ENCODE measurements at regions of chr1 and their contacts with region 1.

Region 1: GRCh38 chr1:57512386-57512785 is 88.5 kb upstream of the DAB1 start:
- DNase-seq: no peak
- H3K4me3 ChIP-seq: no peak overlapping the region
- H3K27ac ChIP-seq: no peak overlapping the region
- H3K4me1 ChIP-seq: no peaks in the 10 kb centered on the region
- H3K27me3 ChIP-seq: no peaks in the 10 kb centered on the region
- CTCF ChIP-seq: no peak
- POLR2A ChIP-seq: no peak

Region 2: DNA sequence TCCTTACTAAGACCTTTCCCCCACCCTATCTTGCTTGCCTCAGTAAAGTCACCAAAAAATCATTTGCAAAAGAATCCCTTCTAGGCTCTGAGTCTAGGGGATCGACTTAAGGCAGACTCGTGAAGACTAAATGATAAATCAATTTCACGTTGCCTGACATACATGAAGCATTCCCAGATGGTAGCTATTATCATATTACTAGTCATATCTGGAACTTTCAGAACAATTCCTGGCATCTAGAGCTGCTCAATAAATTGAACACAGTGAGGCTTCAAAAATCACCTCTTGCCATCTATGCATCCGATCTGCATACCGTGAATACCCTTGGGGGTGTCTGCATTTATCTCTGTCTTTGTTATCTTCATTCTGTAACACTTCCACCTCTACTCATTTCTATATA is 38.9 kb before region 1 on chr1:
- intact Hi-C with region 1: loop called (anchors 2 kb)
- DNase-seq: no peak
- H3K4me3 ChIP-seq: no peak overlapping the region
- H3K27ac ChIP-seq: no peak overlapping the region
- H3K4me1 ChIP-seq: no peaks in the 10 kb centered on the region
- H3K27me3 ChIP-seq: no peaks in the 10 kb centered on the region
- CTCF ChIP-seq: no peak
- POLR2A ChIP-seq: no peak

Region 3: GRCh38 chr1:57576756-57577155 is 64.4 kb after region 1 on chr1:
- intact Hi-C with region 1: no loop called
- DNase-seq: no peak
- H3K4me3 ChIP-seq: no peak overlapping the region
- H3K27ac ChIP-seq: no peak overlapping the region
- H3K4me1 ChIP-seq: no peaks in the 10 kb centered on the region
- H3K27me3 ChIP-seq: no peaks in the 10 kb centered on the region
- CTCF ChIP-seq: no peak
- POLR2A ChIP-seq: no peak